Activated T-helper 2 cell treated with anti-CD3 and anti-CD28 coated beads, Interferon-gamma antibody, Interleukin-2, Interleukin-4, amounts not matched to agents 10 μg/mL and 5 μg/mL and 100 μg/mL, durations not matched to agents 14 hours and 24 hours and 36 hours (primary cell): ENCODE measurements at regions of chr10 and their contacts with region 1.

Region 1: GRCh38 chr10:60964257-60965235 is 20.6 kb upstream of the RHOBTB1 start:
- DNase-seq: peak; percentile 19
- H3K4me3 Mint-ChIP-seq: no peak overlapping the region
- H3K27ac Mint-ChIP-seq: no peak overlapping the region
- H3K4me1 Mint-ChIP-seq: peaks cover 26% of the 10 kb centered on the region
- H3K27me3 Mint-ChIP-seq: peaks cover 36% of the 10 kb centered on the region

Region 2: DNA sequence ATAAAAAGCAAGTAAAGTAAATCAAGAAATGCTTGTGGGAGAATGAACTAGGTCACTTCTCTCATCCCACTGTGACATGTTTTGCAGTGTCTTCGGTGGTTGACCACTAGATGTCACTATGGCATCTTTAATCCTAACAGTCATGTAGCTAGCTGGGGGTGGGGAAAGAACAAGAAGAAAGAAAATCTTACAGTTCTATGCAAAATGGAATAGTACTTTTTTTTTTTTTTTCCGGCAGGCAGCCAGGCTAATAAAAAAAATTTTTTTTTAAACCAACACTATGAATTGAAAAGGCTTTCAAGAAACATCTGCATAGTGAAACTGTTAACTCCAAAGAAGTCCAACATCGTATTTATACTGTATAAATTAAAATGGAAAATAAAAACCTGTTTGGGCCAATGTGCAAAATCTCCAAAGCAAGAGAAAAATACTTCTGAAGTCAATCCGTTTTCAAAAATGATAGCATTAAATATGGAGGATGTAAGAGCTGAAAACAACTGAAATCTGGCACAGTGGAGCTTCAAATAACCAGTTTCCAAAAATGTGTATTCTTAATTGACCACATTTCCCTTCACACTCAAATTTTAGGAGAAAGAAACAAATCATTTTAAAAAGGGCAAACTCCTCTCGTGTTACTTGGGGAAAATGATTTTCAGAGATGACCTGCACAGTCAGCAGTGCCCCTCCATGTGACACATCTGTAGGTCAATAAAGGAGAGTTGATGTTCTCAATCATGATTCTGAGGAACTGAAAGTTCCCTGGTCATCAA is 147.7 kb before region 1 on chr10:
- intact Hi-C with region 1: loop called (anchors 1 kb)
- DNase-seq: no peak
- H3K4me3 Mint-ChIP-seq: no peak overlapping the region
- H3K27ac Mint-ChIP-seq: no peak overlapping the region
- H3K4me1 Mint-ChIP-seq: peaks cover 13% of the 10 kb centered on the region
- H3K27me3 Mint-ChIP-seq: peaks cover 26% of the 10 kb centered on the region

Region 3: GRCh38 chr10:60883187-60883586 is 81.4 kb before region 1 on chr10:
- intact Hi-C with region 1: loop called (anchors 2 kb)
- DNase-seq: no peak
- H3K4me3 Mint-ChIP-seq: no peak overlapping the region
- H3K27ac Mint-ChIP-seq: no peak overlapping the region
- H3K4me1 Mint-ChIP-seq: no peaks in the 10 kb centered on the region
- H3K27me3 Mint-ChIP-seq: no peaks in the 10 kb centered on the region

Region 4: GRCh38 chr10:60944159-60944909 is 20.2 kb before region 1 on chr10 and contains the start of gene RHOBTB1:
- intact Hi-C with region 1: loop called (anchors 2 kb)
- DNase-seq: peak; percentile 20
- H3K4me3 Mint-ChIP-seq: peak within 1 kb of the TSS; percentile 76
- H3K27ac Mint-ChIP-seq: peak within 1 kb of the TSS; percentile 21
- H3K4me1 Mint-ChIP-seq: peaks cover 9% of the 10 kb centered on the region
- H3K27me3 Mint-ChIP-seq: peaks cover 74% of the 10 kb centered on the region
- total RNA-seq, gene RHOBTB1: 0.05 and 0.30 TPM in 2 replicates

Region 5: GRCh38 chr10:61423178-61423577 is 458.6 kb after region 1 on chr10:
- intact Hi-C with region 1: no loop called
- DNase-seq: no peak
- H3K4me3 Mint-ChIP-seq: no peak overlapping the region
- H3K27ac Mint-ChIP-seq: no peak overlapping the region
- H3K4me1 Mint-ChIP-seq: no peaks in the 10 kb centered on the region
- H3K27me3 Mint-ChIP-seq: no peaks in the 10 kb centered on the region